ENCODE measurements at regions of chr1 and their contacts with region 1.

Region 1: GRCh38 chr1:1273512-1274298 is at the start of gene UBE2J2:
- DNase-seq: peak; percentile 93
- ATAC-seq: peak; percentile 92 to 95
- H3K4me3 ChIP-seq: peak within 1 kb of the TSS; percentile 79 to 92 (median 88)
- H3K27ac ChIP-seq: peak within 1 kb of the TSS; percentile 83 to 93 (median 90)
- H3K4me1 ChIP-seq: peaks cover 34 to 43% of the 10 kb centered on the region in 2 donors
- H3K27me3 ChIP-seq: no peaks in the 10 kb centered on the region
- CTCF ChIP-seq: no peak
- POLR2A ChIP-seq: peak; percentile 75 to 88
- total RNA-seq, gene UBE2J2: 31.3 to 42.3 (median 38.3) TPM

Region 2: DNA sequence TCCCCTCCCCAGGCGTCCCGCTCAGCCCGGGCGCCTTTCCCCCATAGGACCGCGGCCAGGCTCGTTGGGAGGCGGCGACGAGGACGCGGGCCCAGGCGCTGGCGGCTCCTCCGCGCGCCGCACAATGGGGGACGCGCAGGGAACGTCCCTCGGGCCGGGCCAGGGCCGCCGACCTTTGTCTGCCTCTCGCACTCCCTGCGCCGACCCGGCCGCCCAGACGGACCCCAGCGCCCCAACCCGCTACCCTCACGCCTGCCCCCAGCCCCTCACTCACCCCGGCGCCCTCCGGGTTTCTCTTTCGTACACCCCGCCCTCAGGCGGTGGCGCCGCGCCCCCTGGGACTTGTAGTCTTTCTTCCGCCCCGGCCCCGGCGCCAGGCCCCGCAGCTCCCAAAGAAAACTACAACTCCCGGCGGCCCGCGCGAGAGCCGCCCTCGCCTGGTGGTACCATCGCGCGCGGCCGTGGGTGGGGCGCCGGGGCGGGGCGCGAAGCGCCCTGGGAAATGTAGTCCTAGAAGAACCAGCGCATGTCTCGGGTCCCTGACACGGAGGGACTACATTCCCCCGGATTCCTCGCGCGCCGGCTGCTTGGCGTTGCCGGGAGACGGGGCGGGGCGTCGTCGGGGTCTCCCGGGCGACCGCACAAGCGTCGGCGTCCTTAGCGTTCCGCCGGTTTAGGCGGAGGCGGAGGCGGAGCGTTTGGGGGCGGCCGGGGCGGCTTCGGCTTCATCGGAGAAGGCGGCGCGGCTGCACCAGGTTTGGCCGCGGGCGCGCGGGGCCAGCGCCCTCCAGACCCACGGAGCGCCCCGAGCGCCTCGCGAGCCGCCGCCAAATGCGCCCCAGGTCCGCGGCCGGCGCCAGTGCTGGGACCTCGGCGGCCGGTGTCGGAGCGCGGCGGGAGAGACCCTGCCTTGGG is 157.7 kb before region 1 on chr1 and contains the start of gene C1orf159:
- in situ Hi-C with region 1: loop called in 1 of 4 experiments (anchors 25 kb)
- intact Hi-C with region 1: loop called (anchors 1 kb)
- DNase-seq: peak; percentile 96 to 99
- ATAC-seq: peak; percentile 99
- H3K4me3 ChIP-seq: peak within 1 kb of the TSS; percentile 57 to 97 (median 76)
- H3K27ac ChIP-seq: peak within 1 kb of the TSS; percentile 63 to 85 (median 74)
- H3K4me1 ChIP-seq: peaks cover 3 to 7% of the 10 kb centered on the region in 2 donors
- H3K27me3 ChIP-seq: peaks cover 0 to 14% (median under 1%) of the 10 kb centered on the region in 3 donors
- CTCF ChIP-seq: no peak
- POLR2A ChIP-seq: no peak
- total RNA-seq, gene C1orf159: 2.8 to 6.4 (median 5.3) TPM

Region 3: GRCh38 chr1:1144122-1144842 is 129.4 kb before region 1 on chr1:
- in situ Hi-C with region 1: loop called in 1 of 4 experiments (anchors 25 kb)
- intact Hi-C with region 1: no loop called
- DNase-seq: no peak
- ATAC-seq: no peak
- H3K4me3 ChIP-seq: no peak overlapping the region
- H3K27ac ChIP-seq: no peak overlapping the region
- H3K4me1 ChIP-seq: no peaks in the 10 kb centered on the region
- H3K27me3 ChIP-seq: peaks cover 3 to 24% (median 19%) of the 10 kb centered on the region in 3 donors
- CTCF ChIP-seq: no peak
- POLR2A ChIP-seq: no peak

Region 4: DNA sequence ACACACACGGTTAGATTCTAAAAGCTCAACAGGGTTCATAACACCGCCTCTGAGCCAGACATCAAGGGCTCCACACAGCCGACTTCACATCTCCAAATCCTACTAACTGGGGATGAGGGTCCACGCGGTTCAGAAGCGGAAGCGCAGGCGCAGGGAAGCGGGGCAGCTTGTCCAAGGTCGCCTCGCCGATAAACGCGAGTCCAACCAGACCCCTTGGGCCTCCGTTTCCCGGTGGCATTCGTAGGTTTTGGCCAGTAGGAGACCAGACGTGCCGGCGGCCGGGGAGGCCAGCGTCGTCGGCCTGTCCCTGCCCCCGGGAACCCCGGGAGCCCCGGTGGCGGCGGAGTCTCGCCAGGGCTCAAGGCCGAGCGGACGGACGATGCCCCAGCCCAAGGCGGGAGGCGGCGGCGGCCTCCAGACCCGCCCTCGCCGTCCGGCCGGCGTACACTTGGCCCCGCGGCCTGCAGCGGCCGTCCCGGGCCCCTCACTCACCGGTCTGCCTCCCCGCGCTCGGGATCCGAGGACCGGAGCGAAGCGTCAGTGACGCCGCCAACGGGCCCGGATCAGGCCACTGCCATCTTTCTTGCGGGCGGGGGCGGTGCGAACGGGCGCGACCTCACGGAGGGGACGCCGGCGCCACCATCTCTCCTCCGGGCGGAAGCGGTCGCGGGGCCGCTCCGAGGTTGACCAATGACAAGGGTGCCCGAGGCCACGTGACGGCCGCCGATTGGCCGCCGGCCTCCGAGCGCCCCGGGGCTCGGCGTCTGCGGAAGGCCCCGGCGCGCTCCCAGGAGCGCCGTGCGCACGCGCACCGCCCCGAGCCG is 42.1 kb before region 1 on chr1 and contains the start of gene SDF4:
- in situ Hi-C with region 1: no loop called
- intact Hi-C with region 1: loop called (anchors 1 kb)
- DNase-seq: peak; percentile 94 to 95
- ATAC-seq: peak; percentile 90 to 93
- H3K4me3 ChIP-seq: peak within 1 kb of the TSS; percentile 88 to 99 (median 91)
- H3K27ac ChIP-seq: peak within 1 kb of the TSS; percentile 87 to 98 (median 93)
- H3K4me1 ChIP-seq: peaks cover 23% of the 10 kb centered on the region in 2 donors
- H3K27me3 ChIP-seq: no peaks in the 10 kb centered on the region
- CTCF ChIP-seq: peak in 1 of 5 experiments; percentile 14
- POLR2A ChIP-seq: peak; percentile 51 to 74
- total RNA-seq, gene SDF4: 51.0 to 94.2 (median 79.4) TPM

Region 5: DNA sequence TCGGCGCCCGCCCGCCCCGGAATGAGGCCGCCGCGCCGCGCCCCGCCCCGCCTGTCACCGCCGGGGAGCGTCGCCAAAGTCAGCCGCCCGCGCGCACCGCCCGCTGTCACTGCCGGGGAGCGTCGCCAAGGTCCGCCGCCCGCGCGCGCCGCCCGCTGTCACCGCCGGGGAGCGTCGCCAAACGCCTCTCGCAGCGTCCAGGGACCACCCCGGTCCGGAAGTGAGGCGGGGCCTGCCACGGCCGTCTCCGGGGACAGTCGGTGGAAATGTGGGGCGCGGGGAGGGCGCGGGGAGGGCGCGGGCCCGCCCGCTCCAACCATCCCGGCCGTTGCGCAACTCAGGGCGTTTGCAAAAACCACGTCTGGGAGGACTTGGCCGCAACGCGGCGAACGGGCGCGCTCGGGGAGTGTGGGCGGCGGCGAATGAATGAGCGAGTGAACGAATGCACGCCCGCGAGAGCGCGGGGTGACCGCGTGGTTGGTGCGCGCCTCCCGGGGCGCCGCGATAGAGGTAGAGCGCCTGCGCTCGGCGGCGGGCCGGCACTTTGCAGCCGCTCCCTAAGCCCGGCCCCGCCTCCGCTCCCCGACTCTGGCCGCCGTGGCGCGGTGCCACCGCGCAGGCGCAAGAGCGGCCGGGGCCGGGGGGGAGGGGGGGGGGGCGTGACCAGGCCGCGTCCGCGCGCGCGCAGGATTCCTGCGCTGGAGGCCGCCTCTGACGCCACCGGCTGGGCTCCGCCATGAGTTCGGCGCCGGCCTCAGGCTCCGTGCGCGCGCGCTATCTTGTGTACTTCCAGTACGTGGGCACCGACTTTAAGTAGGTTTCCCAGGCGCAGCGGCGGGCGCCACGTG is 34.4 kb after region 1 on chr1 and contains the starts of genes ACAP3 and PUSL1:
- in situ Hi-C with region 1: no loop called
- intact Hi-C with region 1: loop called (anchors 2 kb)
- DNase-seq: peak; percentile 73 to 89
- ATAC-seq: peak; percentile 72 to 77
- H3K4me3 ChIP-seq: peak within 1 kb of the TSS; percentile 67 to 92 (median 75)
- H3K27ac ChIP-seq: peak within 1 kb of the TSS; percentile 88 to 100 (median 96)
- H3K4me1 ChIP-seq: peaks cover 38 to 50% of the 10 kb centered on the region in 2 donors
- H3K27me3 ChIP-seq: no peaks in the 10 kb centered on the region
- CTCF ChIP-seq: peak in 3 of 5 experiments; percentile 20 to 51 (median 30)
- POLR2A ChIP-seq: peak in 1 of 2 donors; percentile 47
- total RNA-seq, gene ACAP3: 18.4 to 31.9 (median 25.8) TPM
- total RNA-seq, gene PUSL1: 6.2 to 13.1 (median 9.5) TPM

Region 6: GRCh38 chr1:1406817-1407635 is 133.3 kb after region 1 on chr1 and contains the start of gene MRPL20:
- in situ Hi-C with region 1: no loop called
- intact Hi-C with region 1: loop called (anchors 2 kb)
- DNase-seq: peak; percentile 91 to 93
- ATAC-seq: peak; percentile 97 to 98
- H3K4me3 ChIP-seq: peak within 1 kb of the TSS; percentile 85 to 100 (median 93)
- H3K27ac ChIP-seq: peak within 1 kb of the TSS; percentile 79 to 95 (median 84)
- H3K4me1 ChIP-seq: peaks cover 35% of the 10 kb centered on the region in 2 donors
- H3K27me3 ChIP-seq: no peaks in the 10 kb centered on the region
- CTCF ChIP-seq: no peak
- POLR2A ChIP-seq: peak; percentile 62 to 86
- total RNA-seq, gene MRPL20: 167 to 260 (median 203) TPM